ENCODE measurements at regions of chr3 and their contacts with region 1.

Region 1: DNA sequence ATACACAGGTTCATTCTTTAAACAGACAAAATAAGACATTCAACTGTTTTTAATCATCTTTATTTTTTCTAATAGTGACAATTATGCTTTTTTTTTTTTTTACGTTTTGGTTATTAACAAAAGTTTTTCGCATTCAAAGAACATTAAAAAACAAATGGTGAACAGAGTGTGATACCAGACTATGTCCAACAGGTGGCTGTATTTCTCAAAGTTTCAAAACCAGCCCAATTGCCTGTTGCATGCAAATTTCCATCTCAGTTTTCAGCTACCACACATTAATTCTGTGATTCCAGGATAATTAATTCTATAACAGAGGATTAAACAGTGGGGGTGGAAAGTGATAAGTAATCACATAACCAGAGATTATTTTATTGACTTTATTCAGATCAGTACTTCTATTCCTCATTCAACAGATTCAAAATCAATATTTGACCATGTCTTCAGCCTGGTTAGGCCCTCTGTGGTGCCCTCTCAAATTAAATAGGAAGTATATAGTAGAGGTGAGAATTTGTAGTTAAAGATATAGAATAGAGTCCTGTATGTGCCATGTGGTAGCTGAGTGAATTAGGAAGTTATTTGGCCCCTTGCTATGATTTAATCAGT is 122.2 kb upstream of the DCBLD2 start:
- DNase-seq: no peak
- H3K4me3 ChIP-seq: no peak overlapping the region
- H3K27ac ChIP-seq: no peak overlapping the region
- H3K4me1 ChIP-seq: no peaks in the 10 kb centered on the region
- H3K27me3 ChIP-seq: no peaks in the 10 kb centered on the region
- CTCF ChIP-seq: peak; percentile 59 to 68 (median 64)

Region 2: GRCh38 chr3:98791341-98792325 is 232.1 kb before region 1 on chr3:
- intact Hi-C with region 1: no loop called
- DNase-seq: no peak
- H3K4me3 ChIP-seq: no peak overlapping the region
- H3K27ac ChIP-seq: no peak overlapping the region
- H3K4me1 ChIP-seq: no peaks in the 10 kb centered on the region
- H3K27me3 ChIP-seq: no peaks in the 10 kb centered on the region
- CTCF ChIP-seq: no peak

Region 3: GRCh38 chr3:99172736-99173657 is 149.3 kb after region 1 on chr3:
- intact Hi-C with region 1: loop called (anchors 2 kb)
- DNase-seq: no peak
- H3K4me3 ChIP-seq: no peak overlapping the region
- H3K27ac ChIP-seq: no peak overlapping the region
- H3K4me1 ChIP-seq: no peaks in the 10 kb centered on the region
- H3K27me3 ChIP-seq: no peaks in the 10 kb centered on the region
- CTCF ChIP-seq: peak; percentile 19 to 61 (median 41)

Region 4: GRCh38 chr3:99250272-99250671 is 226.6 kb after region 1 on chr3:
- intact Hi-C with region 1: loop called (anchors 10 kb)
- DNase-seq: no peak
- H3K4me3 ChIP-seq: no peak overlapping the region
- H3K27ac ChIP-seq: peak overlapping the region; percentile 74 to 78
- H3K4me1 ChIP-seq: peaks cover 2 to 54% of the 10 kb centered on the region in 2 donors
- H3K27me3 ChIP-seq: no peaks in the 10 kb centered on the region
- CTCF ChIP-seq: no peak

Region 5: DNA sequence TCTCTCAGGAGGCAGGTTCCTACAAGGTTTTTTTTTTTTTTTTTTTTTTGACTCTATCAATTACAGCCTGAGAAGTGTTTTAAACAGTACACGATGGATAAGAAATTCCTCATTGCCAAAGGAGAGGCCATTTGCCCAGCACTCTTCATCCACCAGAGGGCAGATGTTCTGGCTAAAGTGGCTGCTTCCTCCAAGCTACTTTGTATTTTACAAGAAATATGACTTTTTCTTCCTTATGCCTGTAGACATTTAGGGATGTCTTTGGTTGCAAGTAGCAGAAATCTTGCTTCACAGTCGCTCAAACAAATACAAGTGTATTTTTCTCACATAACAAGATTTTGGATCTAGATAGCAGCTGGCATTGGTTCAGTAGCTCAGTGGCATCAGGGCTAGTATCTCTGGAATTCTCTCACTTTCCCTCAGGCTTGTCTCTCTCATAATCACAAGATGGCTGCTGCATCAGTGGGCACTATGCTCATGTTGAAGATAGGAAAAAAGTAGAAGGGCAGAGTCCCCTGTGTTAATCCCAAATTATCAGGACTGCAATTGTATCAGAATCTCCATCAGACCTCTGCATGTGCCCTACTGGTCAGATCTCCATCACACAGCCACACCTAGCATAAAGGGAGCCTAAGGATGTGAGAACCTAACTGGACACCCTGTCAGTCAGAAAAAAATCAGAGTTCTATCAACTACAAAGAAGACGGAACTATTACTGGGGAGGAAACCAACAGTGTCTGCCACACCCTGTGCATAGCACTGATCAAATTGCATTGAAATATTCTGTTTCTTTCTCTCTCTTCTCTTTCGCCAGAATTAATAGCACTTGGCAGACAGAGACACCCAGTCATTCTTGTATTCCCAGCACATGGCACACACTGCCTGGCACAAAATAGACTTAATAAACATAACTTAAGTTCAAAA is 475.8 kb after region 1 on chr3:
- intact Hi-C with region 1: loop called (anchors 10 kb)
- DNase-seq: no peak
- H3K4me3 ChIP-seq: peak overlapping the region in 1 of 2 donors; percentile 1
- H3K27ac ChIP-seq: peak overlapping the region; percentile 72 to 87
- H3K4me1 ChIP-seq: peaks cover 10 to 39% of the 10 kb centered on the region in 2 donors
- H3K27me3 ChIP-seq: no peaks in the 10 kb centered on the region
- CTCF ChIP-seq: peak; percentile 23 to 65 (median 59)

Region 6: GRCh38 chr3:99532246-99532645 is 508.6 kb after region 1 on chr3:
- intact Hi-C with region 1: loop called (anchors 10 kb)
- DNase-seq: no peak
- H3K4me3 ChIP-seq: no peak overlapping the region
- H3K27ac ChIP-seq: no peak overlapping the region
- H3K4me1 ChIP-seq: peaks cover 0 to 18% of the 10 kb centered on the region in 2 donors
- H3K27me3 ChIP-seq: no peaks in the 10 kb centered on the region
- CTCF ChIP-seq: peak; percentile 28 to 52 (median 43)

Region 7: GRCh38 chr3:99747915-99748314 is 724.2 kb after region 1 on chr3:
- intact Hi-C with region 1: loop called (anchors 2 kb)
- DNase-seq: no peak
- H3K4me3 ChIP-seq: no peak overlapping the region
- H3K27ac ChIP-seq: peak overlapping the region in 1 of 2 donors; percentile 19
- H3K4me1 ChIP-seq: peaks cover 0 to 18% of the 10 kb centered on the region in 2 donors
- H3K27me3 ChIP-seq: no peaks in the 10 kb centered on the region
- CTCF ChIP-seq: peak; percentile 8 to 42 (median 34)